WTC11 (cell line): ENCODE measurements at regions of chr12 and their contacts with region 1.

Region 1: GRCh38 chr12:52879394-52880351 is 25.2 kb downstream of the KRT8 start:
- DNase-seq: peak; percentile 86
- ATAC-seq: peak; percentile 80
- H3K4me3 Mint-ChIP-seq: peak overlapping the region; percentile 74
- H3K27ac Mint-ChIP-seq: 0 out of 2 replicates have a peak overlapping the region, but pooled peaks have one; percentile 60
- H3K4me1 Mint-ChIP-seq: peaks cover 14% of the 10 kb centered on the region
- H3K27me3 Mint-ChIP-seq: peaks cover 12% of the 10 kb centered on the region
- CTCF ChIP-seq: peak; percentile 86

Region 2: GRCh38 chr12:52380271-52380694 is 499.4 kb before region 1 on chr12:
- CTCF ChIA-PET with region 1: interaction called, 18 read pairs
- POLR2A ChIA-PET with region 1: interaction called, 3 read pairs
- DNase-seq: peak; percentile 66
- ATAC-seq: peak; percentile 78
- H3K4me3 Mint-ChIP-seq: no peak overlapping the region
- H3K27ac Mint-ChIP-seq: no peak overlapping the region
- H3K4me1 Mint-ChIP-seq: no peaks in the 10 kb centered on the region
- H3K27me3 Mint-ChIP-seq: no peaks in the 10 kb centered on the region; the same call in 1 of the 2 replicates
- CTCF ChIP-seq: no peak

Region 3: DNA sequence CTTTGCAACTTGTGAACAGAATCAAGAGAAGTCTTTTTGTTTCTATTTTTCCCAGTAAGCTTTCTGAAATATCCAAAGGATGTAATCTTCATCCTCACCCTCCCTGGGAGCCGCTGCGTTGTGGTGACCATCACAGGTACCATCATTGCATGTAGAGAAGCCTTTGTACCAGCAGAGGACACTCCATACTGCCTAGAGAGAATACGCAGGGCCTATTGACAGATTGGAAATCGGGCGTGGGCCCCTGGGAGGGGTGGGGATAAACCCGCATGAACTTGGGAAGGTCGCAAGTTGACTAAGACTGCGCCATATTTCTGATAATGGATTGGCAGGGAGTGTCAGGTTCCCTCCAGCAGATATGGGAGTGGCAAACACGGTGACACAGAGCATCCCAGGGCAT is 212.2 kb before region 1 on chr12:
- CTCF ChIA-PET with region 1: interaction called, 18 read pairs
- POLR2A ChIA-PET with region 1: no interaction called
- DNase-seq: peak; percentile 24
- ATAC-seq: peak; percentile 75
- H3K4me3 Mint-ChIP-seq: no peak overlapping the region
- H3K27ac Mint-ChIP-seq: no peak overlapping the region
- H3K4me1 Mint-ChIP-seq: no peaks in the 10 kb centered on the region
- H3K27me3 Mint-ChIP-seq: peaks cover 2% of the 10 kb centered on the region; the same call in 1 of the 2 replicates
- CTCF ChIP-seq: no peak

Region 4: DNA sequence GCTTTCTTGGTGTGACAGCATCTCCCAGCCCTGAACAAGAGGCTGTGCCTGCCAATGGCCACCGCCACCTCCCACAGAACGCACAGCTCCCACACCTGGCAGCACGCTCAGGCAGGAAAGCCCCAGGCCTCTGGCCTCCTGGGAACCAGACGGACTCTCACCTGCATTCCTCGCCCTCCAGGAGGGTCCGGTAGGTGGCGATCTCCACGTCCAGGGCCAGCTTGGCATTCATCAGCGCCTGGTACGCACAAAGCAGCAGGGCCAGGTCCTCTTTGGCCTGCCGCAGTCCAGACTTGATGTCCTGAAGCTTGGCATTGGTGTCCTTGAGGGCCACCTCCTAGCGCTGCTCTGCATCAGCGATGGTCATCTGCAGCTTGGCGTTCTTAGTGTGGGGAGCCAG is 164.3 kb before region 1 on chr12:
- CTCF ChIA-PET with region 1: interaction called, 24 read pairs
- POLR2A ChIA-PET with region 1: no interaction called
- DNase-seq: peak; percentile 75
- ATAC-seq: peak; percentile 62
- H3K4me3 Mint-ChIP-seq: peak overlapping the region; percentile 47
- H3K27ac Mint-ChIP-seq: no peak overlapping the region
- H3K4me1 Mint-ChIP-seq: 0 out of 2 replicates have a peak, but pooled peaks cover 6% of the 10 kb centered on the region
- H3K27me3 Mint-ChIP-seq: peaks cover 53% of the 10 kb centered on the region
- CTCF ChIP-seq: no peak

Region 5: GRCh38 chr12:52895061-52895887 is 15.6 kb after region 1 on chr12:
- CTCF ChIA-PET with region 1: interaction called, 29 read pairs
- POLR2A ChIA-PET with region 1: no interaction called
- DNase-seq: no peak
- ATAC-seq: no peak
- H3K4me3 Mint-ChIP-seq: no peak overlapping the region
- H3K27ac Mint-ChIP-seq: no peak overlapping the region
- H3K4me1 Mint-ChIP-seq: no peaks in the 10 kb centered on the region
- H3K27me3 Mint-ChIP-seq: no peaks in the 10 kb centered on the region
- CTCF ChIP-seq: no peak

Region 6: DNA sequence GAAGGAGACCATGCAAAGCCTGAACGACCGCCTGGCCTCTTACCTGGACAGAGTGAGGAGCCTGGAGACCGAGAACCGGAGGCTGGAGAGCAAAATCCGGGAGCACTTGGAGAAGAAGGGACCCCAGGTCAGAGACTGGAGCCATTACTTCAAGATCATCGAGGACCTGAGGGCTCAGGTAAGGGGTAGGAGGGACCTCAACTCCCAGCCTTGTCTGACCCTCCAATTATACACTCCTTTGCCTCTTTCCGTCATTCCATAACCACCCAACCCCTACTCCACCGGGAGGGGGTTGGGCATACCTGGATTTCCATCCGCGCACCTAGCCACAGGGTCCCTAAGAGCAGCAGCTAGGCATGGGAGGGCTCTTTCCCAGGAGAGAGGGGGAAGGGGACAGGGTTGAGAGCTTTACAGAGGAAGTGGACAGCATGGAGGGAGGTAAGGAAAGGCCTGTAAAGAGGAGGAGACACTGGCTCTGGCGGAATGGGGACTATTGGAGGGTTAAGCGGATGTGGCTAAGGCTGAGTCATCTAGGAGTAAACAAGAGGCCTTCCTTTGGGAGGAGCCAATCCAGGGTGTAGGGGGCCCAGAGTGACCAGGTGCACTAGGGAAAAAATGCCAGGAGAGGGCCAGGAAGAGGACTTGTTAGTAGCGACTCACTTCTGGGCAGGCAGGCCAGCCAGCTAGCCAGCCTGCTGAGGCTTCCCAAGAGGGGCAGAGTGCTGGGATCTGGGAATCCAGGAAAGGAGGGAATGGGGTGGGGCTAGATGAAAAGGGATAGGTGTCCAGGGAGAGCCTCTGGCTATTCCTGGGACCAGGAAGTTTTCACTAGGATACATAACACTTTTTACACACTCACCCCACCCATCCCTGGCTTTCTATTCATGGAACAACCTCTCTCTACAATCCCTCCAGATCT is 70.0 kb after region 1 on chr12:
- CTCF ChIA-PET with region 1: interaction called, 17 read pairs
- POLR2A ChIA-PET with region 1: interaction called, 10 read pairs
- DNase-seq: peak; percentile 43
- ATAC-seq: peak; percentile 30
- H3K4me3 Mint-ChIP-seq: peak overlapping the region; percentile 94
- H3K27ac Mint-ChIP-seq: peak overlapping the region; percentile 87
- H3K4me1 Mint-ChIP-seq: peaks cover 65% of the 10 kb centered on the region
- H3K27me3 Mint-ChIP-seq: no peaks in the 10 kb centered on the region
- CTCF ChIP-seq: no peak